ENCODE measurements at regions of chr3 and their contacts with region 1.

Region 1: GRCh38 chr3:94004301-94004910 is 24.0 kb downstream of the STX19 start:
- DNase-seq: no peak
- H3K4me3 Mint-ChIP-seq: no peak overlapping the region
- H3K27ac Mint-ChIP-seq: no peak overlapping the region
- H3K4me1 Mint-ChIP-seq: peaks cover 2% of the 10 kb centered on the region
- H3K27me3 Mint-ChIP-seq: no peaks in the 10 kb centered on the region

Region 2: GRCh38 chr3:93867425-93867824 is 137.0 kb before region 1 on chr3:
- CTCF ChIA-PET with region 1: no interaction called
- intact Hi-C with region 1: no loop called
- DNase-seq: no peak
- H3K4me3 Mint-ChIP-seq: no peak overlapping the region
- H3K27ac Mint-ChIP-seq: no peak overlapping the region
- H3K4me1 Mint-ChIP-seq: no peaks in the 10 kb centered on the region
- H3K27me3 Mint-ChIP-seq: peaks cover 2% of the 10 kb centered on the region

Region 3: GRCh38 chr3:94069194-94069813 is 64.9 kb after region 1 on chr3:
- CTCF ChIA-PET with region 1: interaction called, 30 read pairs
- intact Hi-C with region 1: loop called (anchors 1 kb)
- DNase-seq: no peak
- H3K4me3 Mint-ChIP-seq: no peak overlapping the region
- H3K27ac Mint-ChIP-seq: no peak overlapping the region
- H3K4me1 Mint-ChIP-seq: peaks cover 76% of the 10 kb centered on the region
- H3K27me3 Mint-ChIP-seq: no peaks in the 10 kb centered on the region

Region 4: DNA sequence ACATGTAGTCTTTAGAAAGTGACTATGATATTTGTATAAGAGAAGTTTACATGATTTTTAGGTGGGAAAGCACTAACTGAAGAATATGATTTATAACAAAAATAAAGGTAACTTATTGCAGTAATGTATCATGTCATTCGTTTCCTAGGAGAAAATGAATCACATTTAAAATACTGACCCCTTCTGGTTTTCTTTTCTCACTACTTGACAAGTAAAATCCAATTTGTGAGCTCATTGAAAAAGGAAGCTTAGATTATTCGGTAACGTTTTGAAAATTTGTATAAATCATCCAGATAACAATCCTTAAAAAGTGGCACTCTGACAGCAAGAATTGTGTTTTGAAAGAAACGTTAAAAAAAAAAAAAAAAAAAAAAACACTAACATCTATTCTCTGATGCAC is 97.4 kb after region 1 on chr3:
- CTCF ChIA-PET with region 1: interaction called, 4 read pairs
- intact Hi-C with region 1: loop called (anchors 1 kb)
- DNase-seq: no peak
- H3K4me3 Mint-ChIP-seq: no peak overlapping the region
- H3K27ac Mint-ChIP-seq: no peak overlapping the region
- H3K4me1 Mint-ChIP-seq: no peaks in the 10 kb centered on the region
- H3K27me3 Mint-ChIP-seq: no peaks in the 10 kb centered on the region

Region 5: DNA sequence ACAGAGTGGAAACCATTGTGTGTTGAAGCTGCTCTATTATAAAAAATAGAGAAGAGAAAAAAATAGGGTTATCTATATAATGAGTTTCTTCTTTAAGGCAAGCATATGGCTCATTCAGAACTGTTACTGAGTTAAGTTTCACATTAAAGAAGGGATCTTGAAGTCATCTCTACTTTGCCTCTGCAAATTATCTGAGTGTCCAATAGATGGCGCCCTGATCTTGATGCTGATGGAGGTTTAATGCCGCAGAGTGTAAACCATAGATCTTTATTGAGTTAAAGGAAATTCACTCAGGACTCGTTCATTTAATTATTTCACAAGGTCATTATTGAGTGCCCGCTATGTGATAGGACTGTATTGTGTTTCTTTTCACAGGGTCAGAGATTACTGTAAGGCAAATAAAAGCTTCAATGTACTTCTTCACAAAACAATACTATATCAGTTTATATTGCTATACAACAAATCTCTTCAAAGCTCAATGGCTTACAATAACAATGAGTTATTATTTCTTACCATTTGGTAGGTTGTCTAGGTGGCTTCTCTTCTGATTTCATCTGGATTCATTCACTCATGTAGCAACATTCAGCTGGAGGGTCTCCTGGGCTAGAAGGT is 229.9 kb after region 1 on chr3:
- CTCF ChIA-PET with region 1: interaction called, 5 read pairs
- intact Hi-C with region 1: loop called (anchors 2 kb)
- DNase-seq: peak; percentile 7
- H3K4me3 Mint-ChIP-seq: no peak overlapping the region
- H3K27ac Mint-ChIP-seq: no peak overlapping the region
- H3K4me1 Mint-ChIP-seq: no peaks in the 10 kb centered on the region
- H3K27me3 Mint-ChIP-seq: peaks cover 2% of the 10 kb centered on the region

Region 6: GRCh38 chr3:94249585-94249984 is 245.2 kb after region 1 on chr3:
- CTCF ChIA-PET with region 1: interaction called, 5 read pairs
- intact Hi-C with region 1: loop called (anchors 5 kb)
- DNase-seq: peak; percentile 82
- H3K4me3 Mint-ChIP-seq: no peak overlapping the region
- H3K27ac Mint-ChIP-seq: no peak overlapping the region
- H3K4me1 Mint-ChIP-seq: no peaks in the 10 kb centered on the region
- H3K27me3 Mint-ChIP-seq: peaks cover 19% of the 10 kb centered on the region

Measured in activated naive CD4-positive, alpha-beta T cell treated with anti-CD3 and anti-CD28 coated beads for 36 hours (primary cell).